ENCODE measurements at regions of chrX and their contacts with region 1.

Region 1: DNA sequence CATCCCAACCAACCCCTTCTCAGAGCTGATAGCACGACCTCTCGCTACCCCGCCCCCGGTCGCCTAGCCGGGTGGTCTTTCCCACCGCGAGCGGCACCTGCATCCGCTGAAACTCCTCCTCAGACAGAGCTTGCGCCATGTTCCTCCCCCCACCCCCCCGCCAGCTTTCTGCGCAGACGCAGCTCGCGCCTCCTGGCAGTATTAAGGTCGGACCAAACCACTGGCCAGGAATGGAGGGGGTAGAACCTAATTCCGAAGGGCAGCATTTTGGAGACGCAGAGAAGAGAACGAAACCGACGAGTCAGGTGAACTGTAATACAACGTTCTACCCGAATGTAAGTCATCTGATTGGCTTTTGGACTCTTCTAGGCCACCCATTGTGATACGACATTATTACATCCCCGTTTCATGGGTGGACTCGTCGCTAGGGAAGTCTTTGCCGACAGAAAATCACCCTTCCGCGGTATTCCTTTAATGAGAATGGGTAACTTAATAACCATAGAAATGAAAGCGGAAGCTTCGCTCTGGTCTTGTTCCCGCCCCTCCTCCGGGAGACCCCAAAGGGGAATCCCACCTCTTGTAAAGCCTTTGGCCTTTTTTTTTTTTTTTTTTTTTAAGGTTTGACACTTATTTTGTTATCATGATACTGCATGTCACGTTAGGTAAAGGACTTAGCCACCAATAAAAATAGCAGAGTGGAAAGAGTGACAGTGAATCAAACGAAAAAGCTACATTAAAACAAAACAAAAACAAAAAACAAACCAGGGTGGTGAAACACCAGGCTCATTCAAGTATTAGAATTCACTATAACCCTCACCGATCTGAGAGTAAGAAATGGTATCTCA is at the start of gene GRIPAP1:
- DNase-seq: peak; percentile 82
- H3K4me3 Mint-ChIP-seq: peak within 1 kb of the TSS; percentile 98
- H3K27ac Mint-ChIP-seq: peak within 1 kb of the TSS; percentile 94
- H3K4me1 Mint-ChIP-seq: peaks cover 41% of the 10 kb centered on the region
- H3K27me3 Mint-ChIP-seq: no peaks in the 10 kb centered on the region
- total RNA-seq, gene GRIPAP1: 104 to 116 TPM

Region 2: GRCh38 chrX:49043220-49043986 is 41.1 kb after region 1 on chrX and contains the start of gene TFE3:
- CTCF ChIA-PET with region 1: interaction called, 4 read pairs
- POLR2A ChIA-PET with region 1: interaction called, 26 read pairs
- DNase-seq: peak; percentile 97
- H3K4me3 Mint-ChIP-seq: peak within 1 kb of the TSS; percentile 94
- H3K27ac Mint-ChIP-seq: peak within 1 kb of the TSS; percentile 93
- H3K4me1 Mint-ChIP-seq: peaks cover 41% of the 10 kb centered on the region
- H3K27me3 Mint-ChIP-seq: peaks cover 2% of the 10 kb centered on the region
- total RNA-seq, gene TFE3: 32.2 to 32.7 TPM